Cardiac septum (tissue), 1 donor: ENCODE measurements at regions of chr19 and their contacts with region 1.

Region 1: DNA sequence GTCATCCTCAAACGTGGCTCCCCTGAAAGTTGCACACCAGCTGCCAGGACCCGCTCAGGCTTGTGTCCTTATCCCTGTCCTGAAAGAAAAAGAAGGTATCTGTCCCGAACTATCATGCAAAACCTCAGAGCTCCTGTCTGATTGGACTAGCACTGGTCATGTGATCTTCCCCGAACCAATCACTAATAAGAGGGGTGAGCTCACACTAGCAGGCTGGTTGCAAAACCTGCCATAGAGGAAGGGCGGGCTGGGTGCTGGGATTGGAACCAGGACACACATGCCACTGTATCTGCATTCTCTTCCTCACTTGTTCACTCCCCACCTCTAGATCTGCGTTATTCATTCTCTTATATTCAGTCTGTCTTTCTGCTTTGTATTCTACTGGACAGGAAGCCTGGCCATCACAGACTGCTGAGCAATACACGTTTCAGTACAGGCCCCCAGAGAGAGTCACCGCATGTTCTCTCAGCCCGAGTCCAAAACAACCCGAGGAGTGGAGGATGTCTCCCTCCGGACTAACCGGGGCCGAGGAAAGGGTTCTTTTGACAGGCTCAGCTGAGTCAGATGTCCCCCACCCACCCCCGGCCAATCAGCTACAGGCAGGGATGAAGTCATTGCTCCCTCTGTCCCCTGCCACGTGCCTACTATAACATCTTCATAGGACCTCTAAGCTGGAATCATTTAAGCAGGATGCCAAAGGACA is 97.7 kb downstream of the SIPA1L3 start:
- DNase-seq: peak; percentile 85

Region 2: DNA sequence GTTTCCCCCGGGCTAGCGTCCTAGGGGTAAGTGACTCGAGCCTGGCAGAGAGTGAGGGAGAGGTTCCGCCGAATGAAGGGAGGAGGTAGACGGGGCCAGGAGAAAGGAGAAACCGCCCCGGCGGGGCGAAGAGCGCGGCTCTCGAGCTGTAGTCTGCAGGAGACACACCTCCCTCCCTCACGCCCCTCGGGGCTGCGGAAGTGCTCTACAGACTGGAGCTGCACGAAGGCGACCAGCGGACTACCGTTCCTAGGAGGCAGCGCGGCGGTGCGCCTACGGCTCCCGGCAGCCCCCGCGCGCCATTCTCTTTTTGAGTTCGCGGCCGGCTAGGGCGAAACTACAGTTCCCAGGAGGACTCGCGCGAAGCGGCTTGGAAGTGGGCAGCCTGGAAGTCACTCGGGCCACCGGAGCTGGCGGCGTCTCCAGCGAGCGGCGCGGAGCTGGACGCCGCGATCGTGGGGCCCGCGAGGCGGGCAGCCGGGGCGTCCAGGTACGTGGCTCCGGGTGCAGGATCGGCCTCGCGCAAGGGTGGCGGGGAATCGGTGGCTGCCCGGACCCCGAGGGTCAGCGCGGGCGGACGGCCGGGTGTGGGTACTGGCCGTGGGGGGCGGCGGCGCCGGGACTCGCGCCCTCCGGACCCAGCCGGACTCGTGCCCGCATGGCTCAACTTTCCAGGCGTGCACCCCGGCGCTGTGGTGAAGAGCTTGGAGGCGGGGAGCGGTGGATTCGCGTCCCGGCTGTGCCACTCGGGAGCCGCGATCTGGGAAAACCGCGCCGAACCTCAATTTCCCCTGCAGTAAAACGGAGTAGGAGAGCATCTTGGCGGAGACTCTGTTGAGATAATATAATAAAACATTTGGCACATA is 97.6 kb before region 1 on chr19 and contains the start of gene SIPA1L3:
- intact Hi-C with region 1: loop called (anchors 2 kb)
- DNase-seq: peak; percentile 97
- total RNA-seq, gene SIPA1L3: 14.0 TPM